ENCODE measurements at regions of chr4 and their contacts with region 1.

Region 1: GRCh38 chr4:26197018-26197779 is 123.6 kb upstream of the RBPJ start:
- DNase-seq: peak; percentile 77
- H3K4me3 Mint-ChIP-seq: peak overlapping the region; percentile 71
- H3K27ac Mint-ChIP-seq: peak overlapping the region; percentile 95
- H3K4me1 Mint-ChIP-seq: peaks cover 93% of the 10 kb centered on the region
- H3K27me3 Mint-ChIP-seq: no peaks in the 10 kb centered on the region

Region 2: DNA sequence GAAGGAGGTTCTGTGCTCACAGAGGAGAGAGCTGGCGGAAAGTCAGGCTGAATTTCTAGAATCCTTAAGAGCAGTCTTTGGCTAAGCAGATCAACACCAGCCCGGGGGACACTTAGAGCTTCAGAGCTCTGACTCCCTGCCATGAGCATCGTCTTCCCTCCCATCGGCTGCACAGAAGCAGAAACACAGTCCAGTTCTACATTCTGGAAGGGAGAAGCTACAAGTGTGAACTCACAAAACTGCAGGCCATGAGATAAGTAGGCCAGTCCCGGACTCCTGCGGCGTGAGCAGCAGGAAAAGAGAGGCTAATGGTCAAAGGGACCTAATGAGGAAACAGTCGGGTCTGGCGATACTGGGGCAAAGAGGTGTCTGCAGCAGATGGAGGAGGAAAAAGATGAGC is 1824.3 kb before region 1 on chr4:
- intact Hi-C with region 1: no loop called
- DNase-seq: no peak
- H3K4me3 Mint-ChIP-seq: no peak overlapping the region
- H3K27ac Mint-ChIP-seq: no peak overlapping the region
- H3K4me1 Mint-ChIP-seq: no peaks in the 10 kb centered on the region
- H3K27me3 Mint-ChIP-seq: peaks cover 1% of the 10 kb centered on the region

Region 3: DNA sequence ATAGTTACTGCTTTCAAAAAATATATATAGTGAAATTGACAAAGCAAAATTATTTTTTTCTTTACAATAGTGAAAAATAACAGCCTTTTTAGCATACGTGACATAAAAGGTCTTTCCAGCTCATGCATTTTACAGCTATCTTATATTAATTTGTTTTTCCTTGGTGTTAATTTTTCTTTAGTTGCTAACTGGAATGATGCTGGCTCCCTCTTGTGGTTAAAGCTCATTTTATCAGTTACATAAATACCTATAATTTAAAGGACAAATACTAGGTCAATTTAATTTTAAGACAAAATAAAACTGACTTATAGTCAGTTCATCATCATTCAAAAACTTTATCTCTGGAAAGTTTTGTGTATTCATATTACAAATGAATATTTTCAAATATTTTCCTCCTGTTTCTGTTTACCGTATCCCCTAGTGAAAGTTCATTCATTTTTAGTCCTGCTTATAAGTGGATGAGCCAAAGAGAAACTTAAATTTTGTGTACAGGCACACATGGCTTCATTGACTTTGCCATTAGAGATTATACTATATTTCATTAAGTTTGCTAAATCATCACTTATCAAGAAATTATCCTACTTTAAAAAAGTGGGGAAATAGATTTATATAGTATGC is 830.1 kb before region 1 on chr4:
- intact Hi-C with region 1: no loop called
- DNase-seq: no peak
- H3K4me3 Mint-ChIP-seq: no peak overlapping the region
- H3K27ac Mint-ChIP-seq: no peak overlapping the region
- H3K4me1 Mint-ChIP-seq: no peaks in the 10 kb centered on the region
- H3K27me3 Mint-ChIP-seq: no peaks in the 10 kb centered on the region

Region 4: DNA sequence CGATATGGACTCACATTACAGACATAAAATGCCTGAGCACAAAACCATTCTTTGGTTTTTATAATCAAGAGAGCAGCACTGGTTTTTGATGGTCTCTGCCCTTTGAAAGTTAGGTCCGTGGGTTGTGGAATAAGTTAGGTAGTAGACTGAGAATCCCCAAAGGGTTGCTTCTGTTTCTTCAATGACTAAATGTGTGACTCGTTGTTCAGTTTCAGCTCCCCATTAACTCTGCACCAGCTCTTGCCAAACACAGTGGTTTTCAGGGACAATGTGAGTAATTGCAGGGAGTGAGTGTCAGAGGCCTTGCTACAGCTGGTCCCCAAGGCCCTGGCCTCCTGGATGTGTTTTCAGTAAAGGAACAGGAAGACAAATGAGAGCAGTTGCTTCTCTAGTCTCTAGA is 258.4 kb before region 1 on chr4:
- intact Hi-C with region 1: loop called (anchors 1 kb)
- DNase-seq: no peak
- H3K4me3 Mint-ChIP-seq: peak overlapping the region; percentile 36
- H3K27ac Mint-ChIP-seq: peak overlapping the region; percentile 91
- H3K4me1 Mint-ChIP-seq: peaks cover 37% of the 10 kb centered on the region
- H3K27me3 Mint-ChIP-seq: peaks cover 4% of the 10 kb centered on the region

Region 5: DNA sequence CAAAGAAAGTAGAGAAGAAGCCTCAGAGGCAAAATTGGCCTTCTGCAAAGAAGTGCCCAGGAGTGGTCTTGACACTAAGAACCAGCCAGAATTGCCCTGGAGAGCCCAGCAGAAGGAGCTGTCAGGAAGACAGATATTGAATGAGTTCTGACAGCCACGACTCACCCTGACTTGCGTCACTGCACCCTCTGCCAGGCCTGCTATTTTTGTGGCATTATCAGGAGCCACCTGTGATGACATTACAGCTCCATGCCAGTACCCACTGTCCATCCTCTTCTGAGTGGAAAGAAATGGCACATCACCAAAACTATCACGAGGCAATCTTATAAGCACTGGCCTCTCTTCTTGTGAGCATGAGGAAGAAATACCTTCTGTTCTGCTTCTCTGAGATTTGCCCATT is 215.4 kb before region 1 on chr4:
- intact Hi-C with region 1: no loop called
- DNase-seq: no peak
- H3K4me3 Mint-ChIP-seq: no peak overlapping the region
- H3K27ac Mint-ChIP-seq: no peak overlapping the region
- H3K4me1 Mint-ChIP-seq: no peaks in the 10 kb centered on the region
- H3K27me3 Mint-ChIP-seq: peaks cover 2% of the 10 kb centered on the region

Region 6: GRCh38 chr4:26028793-26029567 is 168.2 kb before region 1 on chr4:
- intact Hi-C with region 1: loop called (anchors 2 kb)
- DNase-seq: peak; percentile 60
- H3K4me3 Mint-ChIP-seq: no peak overlapping the region
- H3K27ac Mint-ChIP-seq: peak overlapping the region; percentile 65
- H3K4me1 Mint-ChIP-seq: peaks cover 19% of the 10 kb centered on the region
- H3K27me3 Mint-ChIP-seq: no peaks in the 10 kb centered on the region

Region 7: DNA sequence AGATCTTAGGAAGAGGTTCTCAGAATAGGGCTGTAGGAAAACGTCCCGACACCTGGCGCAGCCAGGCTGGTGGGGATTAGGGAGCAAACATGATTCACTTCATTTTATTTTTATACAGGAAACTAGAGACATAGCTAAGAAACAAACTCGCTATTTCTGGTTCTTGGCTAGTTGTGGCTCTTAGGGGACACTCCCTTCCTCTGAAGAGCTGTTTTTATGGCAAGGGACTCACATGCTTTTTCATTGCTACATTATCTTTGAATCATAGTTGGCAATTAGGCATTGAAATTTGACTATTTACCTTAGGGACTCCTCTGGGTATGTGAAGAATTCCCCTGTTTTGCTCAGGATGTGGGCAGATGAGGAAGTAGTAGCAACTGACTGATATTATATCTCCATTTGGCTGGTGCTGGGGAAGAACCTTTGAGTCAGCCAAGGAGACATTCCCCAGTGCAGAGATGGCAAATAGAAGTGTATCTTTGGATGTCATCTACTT is 108.7 kb before region 1 on chr4:
- intact Hi-C with region 1: loop called (anchors 1 kb)
- DNase-seq: peak; percentile 34
- H3K4me3 Mint-ChIP-seq: peak overlapping the region; percentile 71
- H3K27ac Mint-ChIP-seq: peak overlapping the region; percentile 94
- H3K4me1 Mint-ChIP-seq: peaks cover 68% of the 10 kb centered on the region
- H3K27me3 Mint-ChIP-seq: no peaks in the 10 kb centered on the region

Region 8: DNA sequence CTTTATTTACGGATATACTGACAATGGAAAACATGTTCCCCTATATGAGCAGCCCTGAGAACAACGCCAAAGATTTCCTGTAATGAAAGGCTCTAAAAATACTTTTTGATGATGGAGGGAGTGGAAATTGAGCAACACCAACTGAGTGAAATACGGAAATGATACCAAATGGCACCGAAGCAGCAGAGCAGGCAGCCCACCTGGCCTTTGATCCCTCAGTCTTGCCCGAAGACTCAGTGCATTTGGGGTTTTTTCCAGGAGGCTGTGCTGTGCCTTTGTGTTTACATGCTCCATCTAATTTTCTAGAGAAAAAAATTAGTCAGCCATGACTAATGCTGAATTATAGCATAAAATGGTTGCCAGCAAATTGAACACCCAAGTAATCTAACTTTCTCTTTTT is 46.3 kb before region 1 on chr4:
- intact Hi-C with region 1: loop called (anchors 1 kb)
- DNase-seq: no peak
- H3K4me3 Mint-ChIP-seq: peak overlapping the region; percentile 1
- H3K27ac Mint-ChIP-seq: peak overlapping the region; percentile 82
- H3K4me1 Mint-ChIP-seq: peaks cover 62% of the 10 kb centered on the region
- H3K27me3 Mint-ChIP-seq: no peaks in the 10 kb centered on the region

Region 9: GRCh38 chr4:26248647-26249046 is 51.4 kb after region 1 on chr4:
- intact Hi-C with region 1: no loop called
- DNase-seq: no peak
- H3K4me3 Mint-ChIP-seq: no peak overlapping the region
- H3K27ac Mint-ChIP-seq: no peak overlapping the region
- H3K4me1 Mint-ChIP-seq: peaks cover 6% of the 10 kb centered on the region
- H3K27me3 Mint-ChIP-seq: peaks cover 2% of the 10 kb centered on the region

Region 10: GRCh38 chr4:26288355-26288909 is 91.2 kb after region 1 on chr4:
- intact Hi-C with region 1: loop called (anchors 1 kb)
- DNase-seq: peak; percentile 20
- H3K4me3 Mint-ChIP-seq: peak overlapping the region; percentile 25
- H3K27ac Mint-ChIP-seq: peak overlapping the region; percentile 61
- H3K4me1 Mint-ChIP-seq: peaks cover 32% of the 10 kb centered on the region
- H3K27me3 Mint-ChIP-seq: no peaks in the 10 kb centered on the region

Region 11: GRCh38 chr4:26746802-26747213 is 549.6 kb after region 1 on chr4:
- intact Hi-C with region 1: loop called (anchors 10 kb)
- DNase-seq: peak; percentile 19
- H3K4me3 Mint-ChIP-seq: no peak overlapping the region
- H3K27ac Mint-ChIP-seq: peak overlapping the region; percentile 35
- H3K4me1 Mint-ChIP-seq: peaks cover 18% of the 10 kb centered on the region
- H3K27me3 Mint-ChIP-seq: peaks cover 27% of the 10 kb centered on the region